ENCODE measurements at regions of chr1 and their contacts with region 1.

Region 1: DNA sequence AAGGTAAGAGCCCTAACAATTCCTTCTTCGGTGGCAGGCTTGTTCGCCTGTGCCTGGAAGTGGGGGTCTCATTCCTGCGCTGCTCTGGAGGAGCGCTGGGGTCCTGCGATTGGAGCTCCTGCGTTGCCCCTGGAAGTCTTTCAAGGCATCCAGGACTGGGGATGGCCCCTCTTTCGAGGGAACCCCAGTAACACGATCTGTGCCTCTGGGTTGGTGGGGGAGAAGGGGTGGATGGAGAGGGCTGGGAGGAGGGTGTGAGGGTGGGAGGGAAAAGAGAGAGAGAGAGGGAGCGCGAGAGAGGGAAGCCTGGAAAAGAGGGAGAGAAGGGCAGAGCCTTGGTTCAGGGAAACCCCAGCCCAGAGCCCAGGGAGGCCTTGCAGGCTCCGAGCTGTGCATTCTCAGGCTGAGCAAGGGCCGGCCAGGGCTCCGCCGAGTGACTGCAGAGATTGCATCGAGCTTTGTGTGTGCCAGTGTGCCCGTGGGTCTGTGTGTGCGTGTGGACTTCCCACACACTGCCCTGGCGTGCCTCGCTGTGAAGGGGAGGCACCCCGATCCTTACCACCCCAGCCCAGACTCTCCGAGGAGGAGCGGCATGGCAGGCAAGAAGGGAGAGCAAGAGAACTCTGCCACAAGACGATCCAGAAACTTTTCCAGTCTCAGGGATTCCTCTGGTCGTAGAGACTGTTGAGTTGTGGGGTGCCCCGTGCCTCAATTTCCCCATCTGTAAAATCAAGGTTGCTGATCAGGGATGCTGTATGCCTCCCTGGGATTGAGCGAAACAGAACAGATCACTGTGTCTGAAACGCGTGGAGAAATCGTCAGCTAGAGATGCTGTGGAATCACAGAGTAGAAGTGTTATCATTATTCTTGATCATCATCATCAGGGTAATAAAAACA is 619 bp downstream of the BCL9 start:
- DNase-seq: peak; percentile 30
- H3K4me3 Mint-ChIP-seq: no peak overlapping the region
- H3K27ac Mint-ChIP-seq: no peak overlapping the region
- H3K4me1 Mint-ChIP-seq: peaks cover 49% of the 10 kb centered on the region
- H3K27me3 Mint-ChIP-seq: peaks cover 2% of the 10 kb centered on the region

Region 2: GRCh38 chr1:147527941-147528936 is 13.7 kb before region 1 on chr1:
- CTCF ChIA-PET with region 1: interaction called, 10 read pairs
- POLR2A ChIA-PET with region 1: no interaction called
- DNase-seq: peak; percentile 27
- H3K4me3 Mint-ChIP-seq: no peak overlapping the region
- H3K27ac Mint-ChIP-seq: no peak overlapping the region
- H3K4me1 Mint-ChIP-seq: peaks cover 4% of the 10 kb centered on the region
- H3K27me3 Mint-ChIP-seq: no peaks in the 10 kb centered on the region